MCF 10A (cell line): ENCODE measurements at regions of chr20 and their contacts with region 1.

Region 1: DNA sequence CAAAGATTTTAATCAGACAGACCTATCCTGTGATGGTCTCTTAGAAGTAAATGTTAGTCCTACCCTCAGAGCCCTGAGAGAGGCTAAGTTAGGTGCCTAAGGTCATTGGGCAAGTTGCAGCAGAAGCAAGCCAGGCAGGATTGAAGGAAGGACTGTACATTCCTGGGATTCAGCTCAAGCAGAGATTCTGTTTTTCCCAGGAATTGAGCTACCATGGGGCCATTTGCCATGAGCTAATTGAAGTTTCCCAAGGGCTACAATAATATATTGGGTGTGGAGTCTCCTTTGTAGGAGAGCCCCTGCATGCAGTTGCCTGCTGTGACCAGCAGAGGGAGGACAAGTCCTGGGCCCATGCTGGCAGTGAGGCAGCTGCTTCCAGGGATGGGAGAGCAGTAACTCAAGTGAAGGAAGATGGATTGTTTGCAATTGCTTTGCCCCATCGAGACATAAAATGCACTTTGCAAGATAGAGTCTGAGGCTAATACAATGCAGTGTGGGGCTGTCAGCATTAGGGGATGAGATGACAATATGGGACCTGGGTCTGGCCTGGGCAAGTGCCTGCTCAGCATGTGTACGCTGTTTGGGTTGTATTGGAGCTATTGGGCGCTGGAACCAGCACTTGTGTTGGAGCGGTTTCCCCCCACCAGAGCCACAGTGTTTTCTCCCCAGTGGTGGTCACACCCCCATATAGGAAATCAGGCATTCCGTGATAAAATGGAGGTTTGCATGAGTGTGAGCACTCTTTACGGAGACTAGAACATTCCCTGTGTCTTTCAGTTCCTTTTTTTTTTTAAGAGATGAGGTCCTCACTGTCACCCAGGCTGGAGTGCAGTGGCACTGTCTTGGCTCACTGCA is 27.9 kb downstream of the DNMT3B start:
- DNase-seq: peak; percentile 66
- H3K4me3 Mint-ChIP-seq: no peak overlapping the region
- H3K27ac Mint-ChIP-seq: no peak overlapping the region
- H3K4me1 Mint-ChIP-seq: no peaks in the 10 kb centered on the region
- H3K27me3 Mint-ChIP-seq: no peaks in the 10 kb centered on the region
- CTCF ChIP-seq: peak; percentile 94

Region 2: DNA sequence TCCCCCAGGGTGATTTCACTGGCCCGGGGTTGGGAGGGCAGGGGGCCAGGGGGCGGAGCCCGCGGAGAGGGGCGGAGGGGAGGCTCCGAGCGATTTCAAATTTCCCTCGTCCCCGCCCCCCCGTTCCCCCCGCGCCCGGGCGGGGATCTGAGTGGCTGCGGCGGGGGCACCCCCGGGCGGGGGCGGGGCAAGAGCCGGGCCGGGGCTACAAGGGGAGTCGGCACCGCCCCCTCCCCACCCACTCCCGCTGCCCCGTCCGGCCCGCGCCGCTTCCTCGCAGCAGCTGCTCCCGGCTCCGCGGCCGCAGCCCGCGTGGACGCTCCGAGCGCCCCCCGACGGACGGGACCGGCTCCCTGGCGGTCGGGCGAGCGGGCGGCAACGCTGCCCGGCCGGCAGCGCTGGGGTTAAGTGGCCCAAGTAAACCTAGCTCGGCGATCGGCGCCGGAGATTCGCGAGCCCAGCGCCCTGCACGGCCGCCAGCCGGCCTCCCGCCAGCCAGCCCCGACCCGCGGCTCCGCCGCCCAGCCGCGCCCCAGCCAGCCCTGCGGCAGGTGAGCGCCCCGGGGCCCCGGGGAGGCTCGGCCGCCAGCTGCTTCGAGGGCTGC is 27.9 kb before region 1 on chr20 and contains the start of gene DNMT3B:
- CTCF ChIA-PET with region 1: interaction called, 11 read pairs
- POLR2A ChIA-PET with region 1: no interaction called
- intact Hi-C with region 1: no loop called
- DNase-seq: peak; percentile 65
- H3K4me3 Mint-ChIP-seq: peak within 1 kb of the TSS; percentile 85
- H3K27ac Mint-ChIP-seq: peak within 1 kb of the TSS; percentile 63
- H3K4me1 Mint-ChIP-seq: no peaks in the 10 kb centered on the region
- H3K27me3 Mint-ChIP-seq: no peaks in the 10 kb centered on the region
- CTCF ChIP-seq: peak; percentile 6
- total RNA-seq, gene DNMT3B: 1.3 and 2.0 TPM in 2 replicates

Region 3: GRCh38 chr20:32804817-32805216 is 14.7 kb after region 1 on chr20:
- CTCF ChIA-PET with region 1: interaction called, 31 read pairs
- POLR2A ChIA-PET with region 1: interaction called, 3 read pairs
- intact Hi-C with region 1: no loop called
- DNase-seq: no peak
- H3K4me3 Mint-ChIP-seq: no peak overlapping the region
- H3K27ac Mint-ChIP-seq: no peak overlapping the region
- H3K4me1 Mint-ChIP-seq: peaks cover 6% of the 10 kb centered on the region
- H3K27me3 Mint-ChIP-seq: no peaks in the 10 kb centered on the region
- CTCF ChIP-seq: no peak

Region 4: GRCh38 chr20:32894026-32894483 is 103.9 kb after region 1 on chr20:
- CTCF ChIA-PET with region 1: interaction called, 5 read pairs
- POLR2A ChIA-PET with region 1: no interaction called
- intact Hi-C with region 1: loop called (anchors 1 kb)
- DNase-seq: peak; percentile 31
- H3K4me3 Mint-ChIP-seq: no peak overlapping the region
- H3K27ac Mint-ChIP-seq: no peak overlapping the region
- H3K4me1 Mint-ChIP-seq: no peaks in the 10 kb centered on the region
- H3K27me3 Mint-ChIP-seq: no peaks in the 10 kb centered on the region
- CTCF ChIP-seq: peak; percentile 30

Region 5: DNA sequence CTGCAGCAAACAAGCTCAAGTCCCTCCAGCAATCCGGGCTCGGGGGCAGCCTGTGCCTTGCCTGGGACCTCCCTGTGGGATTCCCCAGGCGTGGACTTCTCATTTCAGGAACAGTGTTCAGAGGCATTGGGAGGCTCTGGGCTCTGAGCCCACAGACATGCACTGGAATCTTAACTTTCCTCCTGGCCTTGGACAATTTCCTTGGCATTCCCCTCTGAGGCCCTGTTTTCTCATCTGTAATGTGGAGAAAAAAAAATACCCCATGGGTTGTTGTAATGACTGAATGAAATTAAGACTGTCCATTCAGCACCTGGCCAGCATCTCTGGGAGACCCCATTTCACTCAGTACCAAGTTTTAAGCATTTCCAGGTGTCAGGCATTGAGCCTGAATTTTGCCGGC is 306.9 kb after region 1 on chr20:
- CTCF ChIA-PET with region 1: interaction called, 6 read pairs
- POLR2A ChIA-PET with region 1: no interaction called
- intact Hi-C with region 1: loop called (anchors 1 kb)
- DNase-seq: no peak
- H3K4me3 Mint-ChIP-seq: no peak overlapping the region
- H3K27ac Mint-ChIP-seq: no peak overlapping the region
- H3K4me1 Mint-ChIP-seq: no peaks in the 10 kb centered on the region
- H3K27me3 Mint-ChIP-seq: peaks cover 20% of the 10 kb centered on the region
- CTCF ChIP-seq: no peak

Region 6: DNA sequence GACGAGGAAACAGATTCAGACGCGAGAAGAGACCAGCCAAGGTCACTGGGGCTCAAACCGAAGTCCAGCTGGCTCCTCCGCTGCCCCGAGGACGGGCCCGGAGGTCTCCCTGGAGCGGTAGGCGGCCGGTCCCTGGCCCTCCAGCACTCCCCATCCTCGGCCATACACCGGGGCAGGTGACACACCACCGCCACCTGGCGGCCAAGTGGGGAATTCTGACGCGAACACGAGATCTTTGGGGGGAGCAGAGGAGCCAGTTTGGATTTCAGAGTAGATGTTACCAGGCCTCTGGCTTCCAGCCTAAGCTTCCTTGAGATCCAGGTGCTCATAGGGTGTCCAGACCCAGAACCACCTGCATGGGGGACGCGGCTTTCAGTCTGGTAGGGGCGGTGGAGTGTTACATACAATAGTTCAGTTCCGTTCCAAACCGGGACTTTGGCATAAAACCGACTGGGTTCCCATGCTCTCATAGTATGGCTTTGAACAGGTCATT is 509.0 kb after region 1 on chr20:
- CTCF ChIA-PET with region 1: interaction called, 20 read pairs
- POLR2A ChIA-PET with region 1: no interaction called
- intact Hi-C with region 1: loop called (anchors 1 kb)
- DNase-seq: peak; percentile 64
- H3K4me3 Mint-ChIP-seq: no peak overlapping the region
- H3K27ac Mint-ChIP-seq: no peak overlapping the region
- H3K4me1 Mint-ChIP-seq: no peaks in the 10 kb centered on the region
- H3K27me3 Mint-ChIP-seq: peaks cover 68% of the 10 kb centered on the region
- CTCF ChIP-seq: peak; percentile 96